BJ (cell line): ENCODE measurements at regions of chr19 and their contacts with region 1.

Region 1: DNA sequence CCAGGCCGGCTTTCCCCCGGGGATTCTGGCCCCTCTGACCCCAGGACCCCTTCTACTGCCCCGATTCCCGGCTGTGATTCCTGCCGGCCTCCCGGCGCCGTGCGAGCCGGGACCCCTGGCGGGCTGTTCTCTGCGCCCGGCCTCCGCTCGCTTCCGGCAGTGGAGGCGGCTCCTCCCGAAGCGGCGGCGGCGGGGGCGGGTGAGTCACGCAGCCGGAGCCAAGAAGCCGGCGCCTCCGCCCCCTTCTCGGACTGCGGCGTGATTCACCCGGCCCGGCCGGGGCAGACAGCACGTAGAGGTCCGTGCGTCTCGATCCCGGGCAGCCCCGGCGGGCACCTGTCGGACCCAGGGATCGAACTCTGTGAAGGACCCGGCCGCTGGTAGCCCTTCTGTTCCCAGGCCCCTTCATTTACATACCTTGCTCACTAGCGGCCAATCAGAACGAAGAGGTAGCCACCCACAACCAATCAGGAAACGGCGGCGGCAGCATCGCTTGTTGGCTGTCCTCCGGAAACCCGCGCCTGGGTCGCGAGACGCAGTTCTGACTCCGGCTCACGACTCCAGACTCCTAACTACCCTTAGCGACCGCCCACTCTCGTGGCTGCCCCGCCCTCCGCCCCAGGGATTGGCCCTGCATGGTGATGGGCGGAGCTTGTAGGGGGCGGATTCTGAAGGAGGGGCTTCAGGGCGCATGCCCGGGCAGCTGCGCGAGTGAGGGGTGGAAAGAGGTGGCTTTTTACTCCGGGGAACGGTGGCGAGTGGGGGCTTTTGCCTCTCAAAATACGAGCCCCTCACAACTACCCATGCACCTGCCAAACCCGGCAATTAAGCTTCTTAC is at the start of gene SERTAD1:
- DNase-seq: peak; percentile 94
- H3K4me3 ChIP-seq: peak within 1 kb of the TSS; percentile 61
- H3K27me3 ChIP-seq: no peaks in the 10 kb centered on the region
- CTCF ChIP-seq: peak; percentile 83
- polyA plus RNA-seq, gene SERTAD1: 14.5 and 21.9 TPM in 2 replicates

Region 2: DNA sequence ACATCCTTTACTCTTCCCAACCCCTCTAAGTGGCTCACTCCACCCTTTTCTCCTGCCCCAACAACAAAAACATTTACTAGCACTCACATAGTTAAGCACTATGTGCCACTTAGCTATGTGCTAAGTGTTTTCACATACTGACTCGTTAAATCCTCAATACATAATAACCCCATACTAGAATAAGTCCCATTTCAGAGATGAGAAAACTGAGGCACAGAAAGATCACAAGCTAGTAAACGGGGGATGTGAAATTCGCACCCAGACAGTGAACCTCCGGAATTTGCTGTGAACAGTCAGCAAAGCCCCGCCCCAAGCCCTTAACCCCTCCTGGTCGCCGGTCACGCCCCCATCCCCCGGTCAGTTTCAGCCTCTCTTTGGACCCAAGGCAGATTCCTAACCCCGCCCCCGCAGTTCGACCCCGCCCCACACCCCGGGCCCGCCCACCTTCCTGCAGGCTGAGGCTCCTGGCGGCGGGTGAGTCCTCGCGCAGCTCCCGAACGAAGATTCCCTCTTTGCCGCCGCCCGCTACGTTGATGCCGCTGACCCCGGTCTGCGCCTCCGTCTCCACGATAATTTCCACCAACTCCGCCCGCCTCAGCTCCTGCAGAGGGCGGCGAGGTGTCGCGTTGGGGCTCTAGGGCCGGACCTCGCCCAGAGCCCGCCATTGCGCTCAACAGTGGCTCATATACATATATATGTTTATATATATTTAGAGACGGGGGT is 22.2 kb before region 1 on chr19:
- CTCF ChIA-PET with region 1: interaction called, 15 read pairs
- POLR2A ChIA-PET with region 1: interaction called, 3 read pairs
- DNase-seq: peak; percentile 49
- H3K4me3 ChIP-seq: peak overlapping the region; percentile 57
- H3K27me3 ChIP-seq: no peaks in the 10 kb centered on the region
- CTCF ChIP-seq: 0 out of 2 replicates have a peak, but pooled peaks have one; percentile 4

Region 3: DNA sequence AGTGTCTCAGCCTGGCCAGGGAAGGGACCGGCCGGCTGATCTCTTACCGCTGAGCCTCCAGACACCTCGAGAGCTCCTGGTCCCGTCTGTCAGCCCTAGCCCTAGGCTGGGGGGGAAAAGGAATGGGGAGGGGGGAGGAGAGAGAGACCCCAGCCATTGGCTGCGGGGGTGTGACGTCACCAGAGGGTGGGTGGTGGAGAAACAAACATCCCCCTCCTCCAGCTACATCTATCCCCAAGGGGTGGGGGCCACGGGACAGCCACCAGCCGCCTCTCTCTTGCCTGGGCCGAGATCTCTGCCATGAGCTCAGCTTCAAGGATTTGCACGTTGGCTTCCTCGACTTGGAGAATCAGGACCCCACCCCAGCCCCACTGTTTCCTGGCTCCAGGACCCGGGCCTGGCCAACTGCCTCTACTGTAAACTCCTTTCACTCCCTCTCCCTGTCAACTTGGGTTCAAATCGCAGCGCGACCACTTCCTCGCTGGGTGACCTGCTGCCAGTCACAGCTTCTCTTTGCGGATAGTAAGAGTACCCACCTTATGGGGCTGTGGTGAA is 12.3 kb before region 1 on chr19 and contains the start of gene PRX:
- CTCF ChIA-PET with region 1: interaction called, 20 read pairs
- POLR2A ChIA-PET with region 1: no interaction called
- DNase-seq: no peak
- H3K4me3 ChIP-seq: no peak within 1 kb of the TSS
- H3K27me3 ChIP-seq: no peaks in the 10 kb centered on the region
- CTCF ChIP-seq: no peak
- polyA plus RNA-seq, gene PRX: 1.9 and 2.4 TPM in 2 replicates

Region 4: DNA sequence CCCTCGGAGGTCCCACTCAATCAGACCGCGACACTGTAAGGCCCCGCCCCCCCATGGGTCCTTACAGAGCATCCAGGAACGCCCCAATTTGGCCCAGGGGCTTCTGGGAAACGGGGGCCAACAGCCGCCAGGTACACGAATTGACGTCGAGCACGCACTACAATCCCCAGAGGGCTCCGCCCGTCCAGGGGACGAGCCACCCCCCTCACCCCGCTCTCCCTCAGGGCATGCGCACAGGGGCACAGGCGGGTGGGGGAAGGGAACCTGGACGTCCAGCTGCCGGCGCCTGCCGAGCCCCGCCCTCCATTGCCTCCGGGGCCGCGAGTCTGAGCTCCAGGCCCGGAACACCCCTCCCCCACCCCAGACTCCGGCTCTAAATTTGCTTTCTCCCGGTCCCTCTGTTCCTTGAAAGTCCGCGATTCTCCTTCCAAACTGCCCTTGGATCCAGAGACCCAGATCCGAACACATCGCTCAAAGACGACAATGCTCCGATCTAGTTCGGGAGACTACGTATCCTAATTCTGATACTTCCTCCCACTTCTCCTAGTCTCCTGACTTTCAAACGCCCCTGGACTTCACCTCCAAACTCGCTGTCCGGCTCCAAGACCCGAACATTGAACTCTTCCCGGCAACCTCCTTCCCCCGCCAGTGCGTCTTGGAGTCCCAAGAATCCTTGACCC is 17.6 kb after region 1 on chr19:
- CTCF ChIA-PET with region 1: interaction called, 11 read pairs
- POLR2A ChIA-PET with region 1: interaction called, 9 read pairs
- DNase-seq: peak; percentile 99
- H3K4me3 ChIP-seq: peak overlapping the region; percentile 97
- H3K27me3 ChIP-seq: no peaks in the 10 kb centered on the region
- CTCF ChIP-seq: no peak

Region 5: GRCh38 chr19:40472516-40472915 is 46.8 kb after region 1 on chr19:
- CTCF ChIA-PET with region 1: no interaction called
- POLR2A ChIA-PET with region 1: no interaction called
- DNase-seq: no peak
- H3K4me3 ChIP-seq: no peak overlapping the region
- H3K27me3 ChIP-seq: no peaks in the 10 kb centered on the region
- CTCF ChIP-seq: no peak

Region 6: DNA sequence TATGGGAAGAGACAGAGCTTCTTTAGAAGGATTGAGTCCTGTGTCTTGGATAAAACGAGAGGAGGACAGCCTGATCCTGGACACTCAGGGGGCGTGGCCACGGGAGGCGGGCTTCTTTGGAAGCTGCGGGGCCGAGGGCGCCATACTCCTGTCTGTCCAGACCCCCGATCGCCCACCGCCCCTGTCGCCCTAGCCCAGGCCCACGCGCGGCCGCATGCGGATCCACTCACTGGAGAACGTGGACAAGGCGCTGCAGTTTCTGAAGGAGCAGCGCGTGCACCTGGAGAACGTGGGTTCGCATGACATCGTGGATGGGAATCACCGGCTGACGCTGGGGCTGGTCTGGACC is 64.2 kb after region 1 on chr19:
- CTCF ChIA-PET with region 1: no interaction called
- POLR2A ChIA-PET with region 1: no interaction called
- DNase-seq: no peak
- H3K4me3 ChIP-seq: no peak overlapping the region
- H3K27me3 ChIP-seq: peaks cover 2% of the 10 kb centered on the region
- CTCF ChIP-seq: no peak